PC-3 (cell line): ENCODE measurements at regions of chr7 and their contacts with region 1.

Region 1: GRCh38 chr7:97835296-97836138 is 36.7 kb downstream of the ASNS start:
- DNase-seq: peak; percentile 79
- ATAC-seq: peak; percentile 89
- H3K4me3 ChIP-seq: no peak overlapping the region
- H3K27ac ChIP-seq: no peak overlapping the region
- H3K4me1 ChIP-seq: no peaks in the 10 kb centered on the region
- H3K27me3 ChIP-seq: peaks cover 25% of the 10 kb centered on the region
- CTCF ChIP-seq: peak; percentile 84

Region 2: DNA sequence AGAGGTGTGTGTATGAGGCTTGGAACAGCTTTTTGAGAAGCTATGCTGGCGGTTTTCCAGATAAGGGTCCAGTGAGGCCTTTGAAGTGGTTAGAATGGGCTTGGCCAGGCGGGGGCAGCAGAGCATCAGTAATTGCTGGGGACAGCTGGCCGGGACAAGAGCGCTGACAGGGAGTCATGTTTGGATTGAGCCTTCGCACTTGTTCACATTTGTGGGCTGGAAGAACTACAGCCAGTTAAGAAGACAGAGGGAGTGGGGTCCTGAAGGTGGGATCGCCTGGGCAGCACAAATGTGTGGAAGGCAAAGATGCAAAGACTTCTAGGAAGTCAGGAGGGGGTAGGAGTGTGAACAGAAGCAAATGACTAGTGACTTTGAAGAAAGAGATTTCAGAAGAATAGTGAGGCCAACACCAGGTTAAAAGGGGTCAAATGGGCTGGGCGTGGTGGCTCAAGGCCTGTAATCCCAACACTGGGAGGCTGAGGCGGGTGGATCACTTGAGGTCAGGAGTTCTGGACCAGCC is 730.7 kb before region 1 on chr7:
- CTCF ChIA-PET with region 1: no interaction called
- POLR2A ChIA-PET with region 1: no interaction called
- intact Hi-C with region 1: loop called (anchors 1 kb)
- DNase-seq: peak; percentile 75
- ATAC-seq: peak; percentile 95
- H3K4me3 ChIP-seq: no peak overlapping the region
- H3K27ac ChIP-seq: no peak overlapping the region
- H3K4me1 ChIP-seq: no peaks in the 10 kb centered on the region
- H3K27me3 ChIP-seq: no peaks in the 10 kb centered on the region
- CTCF ChIP-seq: peak; percentile 89

Region 3: DNA sequence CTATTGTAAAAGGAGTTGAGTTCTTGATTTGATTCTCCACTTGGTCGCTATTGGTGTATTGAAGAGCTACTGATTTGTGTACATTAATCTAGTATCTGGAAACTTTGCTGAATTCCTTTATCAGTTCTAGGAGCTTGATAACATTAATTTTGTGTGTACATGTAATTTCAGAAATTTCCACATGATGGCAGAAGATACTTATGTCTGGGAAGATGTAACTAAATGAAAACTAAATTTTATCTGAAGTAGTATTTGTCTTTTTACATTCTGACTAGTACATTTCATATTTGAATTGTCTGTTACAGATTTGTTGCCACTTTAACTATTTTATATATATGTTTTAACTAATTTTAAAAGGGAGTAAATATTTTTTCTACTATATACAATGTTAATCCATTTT is 690.4 kb before region 1 on chr7:
- CTCF ChIA-PET with region 1: no interaction called
- POLR2A ChIA-PET with region 1: no interaction called
- intact Hi-C with region 1: loop called (anchors 1 kb)
- DNase-seq: peak; percentile 61
- ATAC-seq: no peak
- H3K4me3 ChIP-seq: no peak overlapping the region
- H3K27ac ChIP-seq: no peak overlapping the region
- H3K4me1 ChIP-seq: no peaks in the 10 kb centered on the region
- H3K27me3 ChIP-seq: no peaks in the 10 kb centered on the region
- CTCF ChIP-seq: peak; percentile 58

Region 4: GRCh38 chr7:97499204-97499603 is 336.3 kb before region 1 on chr7:
- CTCF ChIA-PET with region 1: interaction called, 4 read pairs
- POLR2A ChIA-PET with region 1: no interaction called
- intact Hi-C with region 1: loop called (anchors 1 kb)
- DNase-seq: peak; percentile 37
- ATAC-seq: peak; percentile 69; the same call in 1 of the 2 replicates
- H3K4me3 ChIP-seq: no peak overlapping the region
- H3K27ac ChIP-seq: no peak overlapping the region
- H3K4me1 ChIP-seq: no peaks in the 10 kb centered on the region
- H3K27me3 ChIP-seq: no peaks in the 10 kb centered on the region
- CTCF ChIP-seq: peak; percentile 60

Region 5: GRCh38 chr7:98372993-98373392 is 537.5 kb after region 1 on chr7:
- CTCF ChIA-PET with region 1: no interaction called
- POLR2A ChIA-PET with region 1: no interaction called
- intact Hi-C with region 1: no loop called
- DNase-seq: peak; percentile 92
- ATAC-seq: peak; percentile 65
- H3K4me3 ChIP-seq: no peak overlapping the region
- H3K27ac ChIP-seq: peak overlapping the region; percentile 66
- H3K4me1 ChIP-seq: peaks cover 28% of the 10 kb centered on the region
- H3K27me3 ChIP-seq: no peaks in the 10 kb centered on the region
- CTCF ChIP-seq: no peak